Posterior vena cava (tissue), 2 donors: ENCODE measurements at regions of chr10 and their contacts with region 1.

Region 1: DNA sequence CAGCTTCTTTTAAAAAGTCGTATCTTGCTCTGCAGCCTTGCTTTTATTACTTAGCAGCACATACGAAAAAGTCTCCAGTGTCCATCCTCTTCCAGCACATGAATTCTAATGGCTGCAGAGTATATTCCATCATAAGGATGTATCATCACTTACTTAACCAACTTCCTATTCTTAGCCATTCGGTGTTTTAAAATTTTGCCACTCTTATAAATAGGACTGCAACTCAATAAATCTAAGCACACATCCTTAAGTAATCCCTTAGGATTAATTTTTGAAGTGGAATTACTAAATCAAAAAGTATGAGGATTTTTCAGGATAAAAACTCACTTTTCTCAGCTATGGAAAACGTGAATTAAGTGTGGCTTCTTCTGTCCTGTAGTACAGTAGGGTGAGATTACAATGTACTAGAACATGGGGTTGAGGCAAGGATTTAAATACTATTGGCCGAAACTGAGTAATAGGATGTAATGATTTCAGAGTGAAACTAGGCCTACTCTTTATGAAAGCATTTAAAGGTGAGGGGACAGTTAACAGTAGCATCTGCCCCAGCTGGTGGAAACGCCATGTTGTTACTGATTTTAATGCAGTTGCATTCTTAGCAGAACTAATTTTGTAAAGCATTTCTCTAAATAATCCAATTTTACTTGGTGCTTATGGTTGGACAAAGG is 1035.5 kb downstream of the LRMDA start:
- DNase-seq: no peak

Region 2: GRCh38 chr10:76428551-76429367 is 38.2 kb before region 1 on chr10:
- intact Hi-C with region 1: loop called in 1 of 2 experiments (anchors 1 kb)
- DNase-seq: no peak